ENCODE measurements at regions of chr19 and their contacts with region 1.

Region 1: DNA sequence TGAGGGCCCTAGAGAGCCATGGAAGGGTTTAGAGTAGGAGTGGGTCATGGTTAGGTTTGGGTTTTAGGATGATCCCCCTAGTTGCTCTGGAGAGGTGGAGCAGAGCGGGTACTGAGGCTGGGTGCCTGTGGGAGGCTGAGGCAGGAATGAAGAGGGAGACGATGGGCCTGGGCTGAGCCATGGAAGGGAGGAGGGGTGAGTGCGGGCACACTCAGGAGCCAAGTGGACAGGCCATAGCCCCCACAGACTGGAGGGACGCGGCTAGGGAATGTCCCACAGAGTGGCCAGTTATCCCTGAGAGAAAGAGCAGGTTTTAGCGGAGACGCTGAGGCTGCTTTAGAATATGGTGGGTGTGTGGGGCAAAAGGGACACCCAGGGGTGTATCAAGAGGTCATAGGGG is 6.0 kb upstream of the CATSPERG start:
- DNase-seq: no peak
- ATAC-seq: no peak
- H3K4me3 ChIP-seq: no peak overlapping the region
- H3K27ac ChIP-seq: no peak overlapping the region
- H3K4me1 ChIP-seq: no peaks in the 10 kb centered on the region
- H3K27me3 ChIP-seq: no peaks in the 10 kb centered on the region
- CTCF ChIP-seq: no peak

Region 2: GRCh38 chr19:38234615-38235014 is 95.0 kb before region 1 on chr19:
- intact Hi-C with region 1: loop called (anchors 5 kb)
- DNase-seq: no peak
- ATAC-seq: no peak
- H3K4me3 ChIP-seq: no peak overlapping the region
- H3K27ac ChIP-seq: no peak overlapping the region
- H3K4me1 ChIP-seq: no peaks in the 10 kb centered on the region
- H3K27me3 ChIP-seq: peaks cover 8% of the 10 kb centered on the region
- CTCF ChIP-seq: no peak

Region 3: DNA sequence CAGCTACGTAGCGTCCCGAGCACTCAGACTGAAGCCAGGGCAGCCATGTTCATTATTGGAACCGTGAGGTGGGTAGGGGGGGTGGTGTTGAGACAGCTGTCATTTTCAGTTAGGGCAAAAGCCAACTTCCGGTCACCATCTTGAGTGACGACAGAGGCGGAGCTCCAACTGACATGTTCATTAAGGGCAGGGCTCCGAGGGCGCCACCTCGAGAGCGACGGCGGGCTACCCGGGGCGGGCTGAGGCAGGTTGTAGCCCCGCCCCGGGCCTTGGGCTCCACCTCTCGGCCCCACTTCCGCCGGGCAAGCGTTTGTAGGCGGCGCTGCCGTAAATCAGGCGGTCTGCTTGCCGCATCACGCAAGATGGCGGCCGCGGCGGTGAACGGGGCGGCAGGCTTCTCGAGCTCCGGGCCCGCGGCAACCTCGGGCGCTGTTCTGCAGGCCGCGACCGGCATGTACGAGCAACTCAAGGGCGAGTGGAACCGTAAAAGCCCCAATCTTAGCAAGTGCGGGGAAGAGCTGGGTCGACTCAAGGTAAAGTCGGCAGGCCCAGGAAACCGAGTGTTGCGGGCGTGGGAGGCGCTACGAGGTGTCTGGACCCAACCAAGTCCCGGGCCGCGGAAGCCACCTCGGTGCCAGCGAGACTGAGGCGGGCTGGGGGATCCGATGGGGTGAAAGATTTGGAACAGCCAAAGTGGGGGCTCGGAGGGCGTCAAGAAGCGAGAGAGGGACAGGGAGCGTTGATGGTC is 45.0 kb after region 1 on chr19 and contains the start of gene PSMD8:
- intact Hi-C with region 1: no loop called
- DNase-seq: peak; percentile 100
- ATAC-seq: peak; percentile 99
- H3K4me3 ChIP-seq: peak within 1 kb of the TSS; percentile 82
- H3K27ac ChIP-seq: peak within 1 kb of the TSS; percentile 89
- H3K4me1 ChIP-seq: peaks cover 16% of the 10 kb centered on the region
- H3K27me3 ChIP-seq: no peaks in the 10 kb centered on the region
- CTCF ChIP-seq: peak; percentile 44
- total RNA-seq, gene PSMD8: 123 TPM

Measured in upper lobe of right lung (tissue), 1 donor.